B cell (primary cell): ENCODE measurements at regions of chr2 and their contacts with region 1.

Region 1: GRCh38 chr2:149017116-149017985 is 21.1 kb upstream of the LYPD6B start:
- DNase-seq: peak; percentile 79
- ATAC-seq: peak; percentile 36
- H3K4me3 ChIP-seq: no peak overlapping the region
- H3K4me3 Mint-ChIP-seq: no peak overlapping the region
- H3K27ac ChIP-seq: no peak overlapping the region
- H3K27ac Mint-ChIP-seq: no peak overlapping the region
- H3K4me1 ChIP-seq: peaks cover 29 to 46% of the 10 kb centered on the region in 2 donors
- H3K4me1 Mint-ChIP-seq: peaks cover 43% of the 10 kb centered on the region
- H3K27me3 ChIP-seq: no peaks in the 10 kb centered on the region
- H3K27me3 Mint-ChIP-seq: peaks cover 4% of the 10 kb centered on the region
- CTCF ChIP-seq: peak; percentile 91

Region 2: DNA sequence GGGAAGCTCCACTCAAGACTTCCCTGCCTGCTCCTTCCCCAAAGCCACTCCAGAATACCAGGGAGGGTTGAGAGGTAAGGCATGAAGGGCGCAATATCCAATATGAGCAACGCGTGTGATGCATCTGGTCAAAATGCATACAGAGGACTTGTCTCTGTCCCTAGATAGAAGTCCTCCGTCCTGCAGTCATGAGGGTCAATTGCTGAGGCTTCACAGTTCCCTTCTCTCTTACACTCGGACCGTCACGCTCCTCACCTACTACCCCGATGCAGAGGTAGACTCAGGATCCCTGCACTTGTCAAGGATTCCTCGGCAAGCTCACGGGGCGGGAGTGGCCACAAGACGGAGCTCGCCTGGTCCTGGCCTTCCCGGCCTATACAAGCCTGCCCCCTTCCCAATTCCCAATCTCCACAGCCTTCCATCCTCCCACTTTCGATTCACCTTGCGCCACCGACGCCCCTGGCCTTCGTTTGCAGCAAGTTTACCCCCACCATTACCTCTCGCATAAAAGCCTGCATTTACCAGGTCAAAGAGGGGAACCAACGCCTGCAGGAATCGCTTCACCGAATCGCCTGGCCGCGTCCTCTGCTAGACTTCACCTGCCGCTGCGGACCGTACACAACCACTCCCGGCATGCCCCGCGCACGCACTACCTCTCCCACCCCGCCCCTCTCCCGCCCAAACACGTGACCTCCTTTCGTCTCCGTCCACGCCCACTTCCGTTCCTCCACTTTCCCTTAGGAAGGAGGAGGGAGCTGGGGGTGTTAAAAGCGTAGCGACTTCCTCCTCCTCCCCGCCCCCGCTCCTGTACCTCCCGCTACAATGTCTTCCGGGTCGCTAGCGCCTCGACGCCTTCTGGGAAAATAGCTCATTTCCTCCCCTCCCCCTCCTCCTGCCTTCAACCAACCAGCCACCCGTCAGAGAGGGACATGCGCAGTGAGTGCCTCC is 997.0 kb before region 1 on chr2 and contains the start of gene ORC4:
- CTCF ChIA-PET with region 1: no interaction called
- POLR2A ChIA-PET with region 1: no interaction called
- intact Hi-C with region 1: loop called (anchors 10 kb)
- DNase-seq: peak; percentile 99
- ATAC-seq: peak; percentile 89
- H3K4me3 ChIP-seq: peak within 1 kb of the TSS; percentile 79 to 95 (median 80)
- H3K4me3 Mint-ChIP-seq: peak within 1 kb of the TSS; percentile 99
- H3K27ac ChIP-seq: peak within 1 kb of the TSS; percentile 91 to 92
- H3K27ac Mint-ChIP-seq: peak within 1 kb of the TSS; percentile 94
- H3K4me1 ChIP-seq: peaks cover 23 to 37% of the 10 kb centered on the region in 2 donors
- H3K4me1 Mint-ChIP-seq: peaks cover 52% of the 10 kb centered on the region
- H3K27me3 ChIP-seq: no peaks in the 10 kb centered on the region
- H3K27me3 Mint-ChIP-seq: no peaks in the 10 kb centered on the region
- CTCF ChIP-seq: no peak
- total RNA-seq, gene ORC4: 44.3 and 48.9 TPM in 2 replicates

Region 3: GRCh38 chr2:149027590-149028218 is 10.4 kb after region 1 on chr2:
- CTCF ChIA-PET with region 1: interaction called, 38 read pairs
- POLR2A ChIA-PET with region 1: no interaction called
- intact Hi-C with region 1: no loop called
- DNase-seq: no peak
- ATAC-seq: no peak
- H3K4me3 ChIP-seq: no peak overlapping the region
- H3K4me3 Mint-ChIP-seq: no peak overlapping the region
- H3K27ac ChIP-seq: no peak overlapping the region
- H3K27ac Mint-ChIP-seq: no peak overlapping the region
- H3K4me1 ChIP-seq: peaks cover 12 to 21% of the 10 kb centered on the region in 2 donors
- H3K4me1 Mint-ChIP-seq: peaks cover 31% of the 10 kb centered on the region
- H3K27me3 ChIP-seq: no peaks in the 10 kb centered on the region
- H3K27me3 Mint-ChIP-seq: peaks cover 4% of the 10 kb centered on the region
- CTCF ChIP-seq: no peak

Region 4: GRCh38 chr2:149040451-149040850 is 23.1 kb after region 1 on chr2:
- CTCF ChIA-PET with region 1: interaction called, 54 read pairs
- POLR2A ChIA-PET with region 1: no interaction called
- intact Hi-C with region 1: loop called (anchors 1 kb)
- DNase-seq: peak; percentile 45
- ATAC-seq: no peak
- H3K4me3 ChIP-seq: no peak overlapping the region
- H3K4me3 Mint-ChIP-seq: peak overlapping the region; percentile 42
- H3K27ac ChIP-seq: no peak overlapping the region
- H3K27ac Mint-ChIP-seq: no peak overlapping the region
- H3K4me1 ChIP-seq: peaks cover 11 to 20% of the 10 kb centered on the region in 2 donors
- H3K4me1 Mint-ChIP-seq: peaks cover 17% of the 10 kb centered on the region
- H3K27me3 ChIP-seq: peaks cover 0 to 17% (median 8%) of the 10 kb centered on the region in 4 experiments
- H3K27me3 Mint-ChIP-seq: peaks cover 14% of the 10 kb centered on the region
- CTCF ChIP-seq: peak; percentile 41

Region 5: DNA sequence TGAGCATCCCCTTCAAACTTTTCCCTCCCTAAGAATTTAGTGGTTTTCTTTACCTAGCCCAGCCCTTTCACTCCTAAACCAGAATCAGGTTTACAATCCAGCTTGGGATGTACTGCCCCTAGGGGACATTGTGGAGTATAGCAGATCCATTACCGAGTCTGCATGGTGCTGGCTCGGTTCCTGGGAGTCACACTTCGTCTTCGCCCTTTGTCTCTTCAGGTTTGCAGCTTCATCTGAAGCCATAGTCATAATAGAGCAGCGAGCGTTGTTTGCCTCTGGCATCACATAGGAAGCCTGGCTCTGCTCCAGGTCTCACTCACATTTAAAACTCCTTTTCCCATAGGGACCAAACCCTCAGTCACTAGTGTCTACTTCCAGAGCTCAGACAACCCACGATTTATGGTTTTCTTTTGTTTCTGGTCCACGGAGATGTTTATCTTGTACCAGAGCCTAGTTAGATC is 296.2 kb after region 1 on chr2:
- CTCF ChIA-PET with region 1: interaction called, 43 read pairs
- POLR2A ChIA-PET with region 1: no interaction called
- intact Hi-C with region 1: loop called (anchors 1 kb)
- DNase-seq: peak; percentile 21
- ATAC-seq: peak; percentile 65
- H3K4me3 ChIP-seq: no peak overlapping the region
- H3K4me3 Mint-ChIP-seq: no peak overlapping the region
- H3K27ac ChIP-seq: no peak overlapping the region
- H3K27ac Mint-ChIP-seq: no peak overlapping the region
- H3K4me1 ChIP-seq: peaks cover 0 to 3% of the 10 kb centered on the region in 2 donors
- H3K4me1 Mint-ChIP-seq: peaks cover 4% of the 10 kb centered on the region
- H3K27me3 ChIP-seq: peaks cover 0 to 9% (median 0%) of the 10 kb centered on the region in 4 experiments
- H3K27me3 Mint-ChIP-seq: peaks cover 21% of the 10 kb centered on the region
- CTCF ChIP-seq: peak; percentile 81

Region 6: GRCh38 chr2:149566652-149567051 is 549.3 kb after region 1 on chr2:
- CTCF ChIA-PET with region 1: interaction called, 173 read pairs
- POLR2A ChIA-PET with region 1: no interaction called
- intact Hi-C with region 1: loop called (anchors 1 kb)
- DNase-seq: no peak
- ATAC-seq: no peak
- H3K4me3 ChIP-seq: no peak overlapping the region
- H3K4me3 Mint-ChIP-seq: no peak overlapping the region
- H3K27ac ChIP-seq: no peak overlapping the region
- H3K27ac Mint-ChIP-seq: no peak overlapping the region
- H3K4me1 ChIP-seq: peaks cover 0 to 9% of the 10 kb centered on the region in 2 donors
- H3K4me1 Mint-ChIP-seq: peaks cover 10% of the 10 kb centered on the region
- H3K27me3 ChIP-seq: no peaks in the 10 kb centered on the region
- H3K27me3 Mint-ChIP-seq: no peaks in the 10 kb centered on the region
- CTCF ChIP-seq: no peak